Vagina (tissue), 2 donors: ENCODE measurements at regions of chr19 and their contacts with region 1.

Region 1: GRCh38 chr19:14073261-14073924 is 807 bp downstream of the MISP3 start:
- DNase-seq: no peak
- H3K4me3 ChIP-seq: peak overlapping the region; percentile 60 to 67
- H3K27ac ChIP-seq: peak overlapping the region; percentile 93
- H3K4me1 ChIP-seq: peaks cover 33% of the 10 kb centered on the region
- H3K27me3 ChIP-seq: no peaks in the 10 kb centered on the region
- CTCF ChIP-seq: peak in 1 of 3 experiments; percentile 52
- POLR2A ChIP-seq: no peak

Region 2: DNA sequence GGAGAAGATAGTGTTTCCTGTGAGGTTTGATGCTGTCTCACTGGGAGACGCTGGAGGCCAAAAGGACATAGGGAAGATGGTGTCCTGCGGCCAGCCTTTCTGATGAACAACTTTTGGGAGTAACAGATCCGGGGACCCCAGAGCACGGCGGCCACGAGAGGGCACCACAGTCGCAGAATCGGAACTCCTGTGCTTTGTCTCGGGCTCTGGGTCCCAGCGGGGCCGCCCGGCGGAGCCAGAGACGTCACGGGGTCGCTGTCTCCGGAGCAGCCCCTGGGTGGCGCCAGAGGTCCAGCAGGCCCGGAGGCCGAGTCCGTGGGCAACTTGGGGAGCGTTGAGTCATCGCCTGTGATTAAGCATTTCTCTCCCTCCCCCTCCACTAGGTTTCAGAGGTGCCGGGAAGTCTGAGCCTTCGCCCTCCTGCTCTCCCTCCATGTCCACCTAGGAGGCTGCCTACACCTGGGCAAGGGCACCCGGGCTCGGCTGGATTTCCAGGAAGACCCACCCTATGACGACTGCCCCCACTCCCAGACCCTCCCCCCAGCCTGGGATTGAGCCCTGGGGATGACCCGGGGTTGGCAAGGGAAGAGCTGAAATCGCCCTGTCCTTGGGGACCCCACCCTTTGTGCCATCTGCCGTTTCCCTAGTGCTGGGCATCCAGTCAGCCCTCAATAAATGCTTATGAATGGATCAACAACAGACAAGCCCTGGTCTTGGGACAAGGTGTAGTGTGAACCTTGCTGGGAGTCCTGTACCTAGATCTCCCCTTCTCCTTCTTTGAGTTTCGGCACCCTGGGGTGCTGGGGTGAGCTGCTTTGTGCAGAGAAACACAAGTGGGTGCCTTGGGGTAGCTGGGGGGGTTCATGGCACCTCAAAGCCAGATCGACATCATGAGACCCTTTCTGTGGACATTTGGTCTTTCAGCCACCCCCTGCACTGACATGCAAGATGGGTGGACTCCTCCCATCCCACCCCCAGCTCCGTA is 193.0 kb before region 1 on chr19:
- intact Hi-C with region 1: loop called (anchors 2 kb)
- DNase-seq: peak in 1 of 2 donors; percentile 97
- H3K4me3 ChIP-seq: peak overlapping the region; percentile 11 to 36
- H3K27ac ChIP-seq: peak overlapping the region; percentile 83
- H3K4me1 ChIP-seq: peaks cover 54% of the 10 kb centered on the region
- H3K27me3 ChIP-seq: no peaks in the 10 kb centered on the region
- CTCF ChIP-seq: peak; percentile 97 to 100 (median 100)
- POLR2A ChIP-seq: no peak

Region 3: GRCh38 chr19:14136509-14137281 is 63.3 kb after region 1 on chr19 and contains the start of gene ASF1B:
- intact Hi-C with region 1: loop called (anchors 5 kb)
- DNase-seq: peak; percentile 99 to 100
- H3K4me3 ChIP-seq: peak within 1 kb of the TSS; percentile 81 to 93
- H3K27ac ChIP-seq: peak within 1 kb of the TSS; percentile 93
- H3K4me1 ChIP-seq: peaks cover 18% of the 10 kb centered on the region
- H3K27me3 ChIP-seq: no peaks in the 10 kb centered on the region
- CTCF ChIP-seq: peak; percentile 74 to 95 (median 79)
- POLR2A ChIP-seq: peak in 1 of 2 donors; percentile 49
- total RNA-seq, gene ASF1B: 1.7 TPM